ENCODE measurements at regions of chr1 and their contacts with region 1.

Region 1: DNA sequence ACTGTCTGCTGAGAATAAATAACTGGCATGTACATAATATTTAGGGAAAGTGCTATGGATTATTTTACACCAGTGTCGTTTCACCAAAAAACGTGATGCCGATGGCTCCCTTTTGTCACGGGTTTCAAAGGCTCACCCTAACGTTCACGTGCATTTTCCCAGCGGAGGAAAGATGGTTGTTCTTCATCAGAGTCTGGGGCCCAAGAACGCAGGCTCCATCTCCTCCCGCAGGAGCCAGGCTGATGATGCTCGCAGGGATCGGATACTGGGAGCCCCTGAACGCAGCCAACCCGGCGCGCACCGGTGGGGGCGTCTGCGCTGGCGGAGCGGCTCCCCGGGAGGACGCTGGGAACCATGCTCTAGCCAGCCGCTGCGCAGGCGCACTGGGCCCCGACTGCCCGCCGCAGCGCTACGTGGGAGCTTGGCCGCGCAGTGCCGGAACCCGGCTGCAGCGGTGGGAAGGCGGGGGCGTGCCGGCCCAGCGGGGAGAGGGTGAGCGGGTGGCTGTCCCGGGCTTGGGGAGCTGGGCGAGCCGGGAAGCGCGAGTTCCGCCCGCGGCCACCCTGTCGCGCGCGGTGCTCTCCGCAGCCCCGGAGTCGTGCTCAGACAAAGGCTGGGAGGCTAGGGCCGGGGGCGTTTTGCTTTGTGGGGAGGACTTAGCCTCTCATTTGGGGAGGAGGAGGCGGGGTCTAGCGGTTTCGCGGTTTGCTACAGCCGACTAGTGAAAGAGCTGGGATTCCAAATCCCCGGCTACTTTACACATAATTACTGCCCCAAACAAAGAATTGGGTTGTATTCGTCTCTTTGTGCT is at the start of gene ZFP69B:
- DNase-seq: no peak
- ATAC-seq: no peak
- H3K4me3 ChIP-seq: no peak within 1 kb of the TSS
- H3K27ac ChIP-seq: no peak within 1 kb of the TSS
- H3K4me1 ChIP-seq: no peaks in the 10 kb centered on the region
- H3K27me3 ChIP-seq: no peaks in the 10 kb centered on the region
- CTCF ChIP-seq: no peak
- POLR2A ChIP-seq: no peak
- RAD21 ChIP-seq: no peak
- total RNA-seq, gene ZFP69B: 0.27 TPM

Region 2: GRCh38 chr1:40508375-40509341 is 58.8 kb after region 1 on chr1 and contains the start of gene EXO5:
- CTCF ChIA-PET with region 1: no interaction called
- POLR2A ChIA-PET with region 1: no interaction called
- RAD21 ChIA-PET with region 1: no interaction called
- intact Hi-C with region 1: loop called (anchors 10 kb)
- DNase-seq: no peak
- ATAC-seq: peak; percentile 65
- H3K4me3 ChIP-seq: peak within 1 kb of the TSS; percentile 28 to 44
- H3K27ac ChIP-seq: no peak within 1 kb of the TSS
- H3K4me1 ChIP-seq: no peaks in the 10 kb centered on the region; a peak in 1 of 4 replicates
- H3K27me3 ChIP-seq: no peaks in the 10 kb centered on the region
- CTCF ChIP-seq: no peak
- POLR2A ChIP-seq: no peak
- RAD21 ChIP-seq: no peak
- total RNA-seq, gene EXO5: 0.57 TPM

Measured in HCT116 (cell line).